PC-9 (cell line): ENCODE measurements at regions of chr13 and their contacts with region 1.

Region 1: GRCh38 chr13:49300739-49301589 is 53.2 kb downstream of the CDADC1 start:
- DNase-seq: peak; percentile 47 to 65
- H3K4me3 ChIP-seq: no peak overlapping the region; the same call in 1 of the 2 replicates
- H3K27ac ChIP-seq: no peak overlapping the region
- H3K4me1 ChIP-seq: no peaks in the 10 kb centered on the region; the same call in 1 of the 2 replicates
- H3K27me3 ChIP-seq: no peaks in the 10 kb centered on the region
- CTCF ChIP-seq: peak; percentile 94

Region 2: GRCh38 chr13:49226613-49227012 is 74.4 kb before region 1 on chr13:
- CTCF ChIA-PET with region 1: no interaction called
- POLR2A ChIA-PET with region 1: no interaction called
- intact Hi-C with region 1: no loop called
- DNase-seq: no peak
- H3K4me3 ChIP-seq: no peak overlapping the region
- H3K27ac ChIP-seq: no peak overlapping the region
- H3K4me1 ChIP-seq: no peaks in the 10 kb centered on the region
- H3K27me3 ChIP-seq: peaks cover 39% of the 10 kb centered on the region
- CTCF ChIP-seq: no peak

Region 3: GRCh38 chr13:49278211-49278610 is 22.8 kb before region 1 on chr13:
- CTCF ChIA-PET with region 1: interaction called, 18 read pairs
- POLR2A ChIA-PET with region 1: no interaction called
- intact Hi-C with region 1: no loop called
- DNase-seq: no peak
- H3K4me3 ChIP-seq: no peak overlapping the region
- H3K27ac ChIP-seq: no peak overlapping the region
- H3K4me1 ChIP-seq: no peaks in the 10 kb centered on the region
- H3K27me3 ChIP-seq: no peaks in the 10 kb centered on the region
- CTCF ChIP-seq: no peak

Region 4: GRCh38 chr13:49436890-49437289 is 135.9 kb after region 1 on chr13:
- CTCF ChIA-PET with region 1: no interaction called
- POLR2A ChIA-PET with region 1: no interaction called
- intact Hi-C with region 1: loop called (anchors 1 kb)
- DNase-seq: no peak
- H3K4me3 ChIP-seq: no peak overlapping the region
- H3K27ac ChIP-seq: no peak overlapping the region
- H3K4me1 ChIP-seq: no peaks in the 10 kb centered on the region
- H3K27me3 ChIP-seq: no peaks in the 10 kb centered on the region
- CTCF ChIP-seq: peak; percentile 51; the same call in 1 of the 2 replicates

Region 5: GRCh38 chr13:49495783-49496762 is 195.1 kb after region 1 on chr13 and contains the start of gene PHF11:
- CTCF ChIA-PET with region 1: no interaction called
- POLR2A ChIA-PET with region 1: no interaction called
- intact Hi-C with region 1: loop called (anchors 10 kb)
- DNase-seq: peak; percentile 67 to 68
- H3K4me3 ChIP-seq: peak within 1 kb of the TSS; percentile 64
- H3K27ac ChIP-seq: peak within 1 kb of the TSS; percentile 72
- H3K4me1 ChIP-seq: peaks cover 15% of the 10 kb centered on the region
- H3K27me3 ChIP-seq: no peaks in the 10 kb centered on the region
- CTCF ChIP-seq: no peak
- total RNA-seq, gene PHF11: 15.2 and 25.2 TPM in 2 replicates

Region 6: DNA sequence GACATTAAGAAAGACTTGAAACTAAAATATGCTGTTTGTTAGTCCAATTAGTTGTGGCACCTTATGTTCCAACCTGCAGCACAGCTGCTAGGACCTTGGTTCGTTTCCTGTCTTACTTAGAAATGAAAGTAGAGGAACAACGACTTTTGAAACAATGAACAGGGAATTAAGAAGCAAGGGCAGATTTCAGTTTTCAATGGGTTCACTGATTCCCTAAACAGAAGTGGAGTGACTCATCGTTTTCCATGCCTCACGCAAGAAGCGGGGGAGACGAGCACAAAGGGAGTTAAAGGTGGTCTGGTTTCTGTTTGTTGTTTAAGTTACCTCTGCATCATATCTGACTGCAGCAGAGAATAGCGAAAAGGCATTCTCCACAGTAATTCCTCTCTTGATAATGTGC is 239.6 kb after region 1 on chr13:
- CTCF ChIA-PET with region 1: no interaction called
- POLR2A ChIA-PET with region 1: no interaction called
- intact Hi-C with region 1: no loop called
- DNase-seq: no peak
- H3K4me3 ChIP-seq: no peak overlapping the region
- H3K27ac ChIP-seq: no peak overlapping the region
- H3K4me1 ChIP-seq: no peaks in the 10 kb centered on the region
- H3K27me3 ChIP-seq: no peaks in the 10 kb centered on the region
- CTCF ChIP-seq: no peak

Region 7: GRCh38 chr13:49858183-49858856 is 557.4 kb after region 1 on chr13:
- CTCF ChIA-PET with region 1: no interaction called
- POLR2A ChIA-PET with region 1: no interaction called
- intact Hi-C with region 1: loop called (anchors 10 kb)
- DNase-seq: peak; percentile 61 to 96
- H3K4me3 ChIP-seq: peak overlapping the region; percentile 55
- H3K27ac ChIP-seq: peak overlapping the region; percentile 98
- H3K4me1 ChIP-seq: peaks cover 33% of the 10 kb centered on the region
- H3K27me3 ChIP-seq: no peaks in the 10 kb centered on the region
- CTCF ChIP-seq: no peak